GM10248 (cell line): ENCODE measurements at regions of chr6 and their contacts with region 1.

Region 1: GRCh38 chr6:166382933-166383801 is at the start of gene MPC1:
- DNase-seq: peak; percentile 97
- CTCF ChIP-seq: no peak

Region 2: GRCh38 chr6:166275714-166276166 is 107.4 kb before region 1 on chr6:
- CTCF ChIA-PET with region 1: interaction called, 33 read pairs
- POLR2A ChIA-PET with region 1: interaction called, 6 read pairs
- DNase-seq: peak; percentile 88
- CTCF ChIP-seq: peak; percentile 100

Region 3: GRCh38 chr6:166286839-166287271 is 96.3 kb before region 1 on chr6:
- CTCF ChIA-PET with region 1: interaction called, 22 read pairs
- POLR2A ChIA-PET with region 1: interaction called, 10 read pairs
- DNase-seq: peak; percentile 51
- CTCF ChIP-seq: no peak

Region 4: GRCh38 chr6:166325383-166326042 is 57.7 kb before region 1 on chr6:
- CTCF ChIA-PET with region 1: interaction called, 10 read pairs
- POLR2A ChIA-PET with region 1: no interaction called
- DNase-seq: peak; percentile 52
- CTCF ChIP-seq: no peak

Region 5: GRCh38 chr6:166348305-166348949 is 34.7 kb before region 1 on chr6:
- CTCF ChIA-PET with region 1: interaction called, 14 read pairs
- POLR2A ChIA-PET with region 1: no interaction called
- DNase-seq: no peak
- CTCF ChIP-seq: no peak

Region 6: DNA sequence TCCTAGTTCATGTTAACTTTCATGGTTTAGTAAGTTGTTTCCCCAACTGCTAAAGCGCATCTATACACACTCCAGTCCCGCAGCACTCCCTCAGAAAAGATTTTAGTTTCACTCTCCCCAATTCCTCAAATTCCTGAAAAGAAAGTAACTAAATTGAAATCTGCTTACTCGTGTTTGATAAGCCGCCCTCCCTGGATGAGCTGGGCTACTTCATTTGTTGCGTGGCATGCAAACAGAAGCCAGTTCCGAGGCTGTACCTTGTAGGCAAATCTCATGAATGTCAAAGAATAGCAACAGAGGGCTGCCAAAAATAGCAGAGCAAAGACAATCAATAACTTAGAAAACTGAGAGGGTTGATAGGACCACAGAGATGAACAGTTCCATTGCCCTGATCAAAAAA is 17.4 kb before region 1 on chr6:
- CTCF ChIA-PET with region 1: interaction called, 14 read pairs
- POLR2A ChIA-PET with region 1: no interaction called
- DNase-seq: no peak
- CTCF ChIP-seq: no peak

Region 7: DNA sequence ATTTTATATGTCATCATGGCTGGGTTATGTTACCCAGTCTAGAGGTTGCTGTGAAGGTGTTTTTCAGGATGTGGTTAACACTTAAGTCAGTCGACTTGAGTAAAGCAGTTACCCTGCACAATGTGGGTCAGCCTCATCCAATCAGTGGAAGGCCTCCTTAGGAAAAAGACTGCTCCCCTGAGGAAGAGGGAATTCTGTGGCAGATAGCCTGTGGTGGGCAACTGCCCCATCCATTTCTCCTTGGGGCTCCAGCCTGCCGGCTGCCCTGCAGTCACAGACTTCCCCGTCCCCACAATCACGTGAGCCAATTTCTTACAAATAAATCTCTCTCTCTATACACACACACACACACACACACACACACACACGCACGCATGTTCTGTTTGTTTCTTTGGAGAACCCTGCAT is 34.1 kb after region 1 on chr6:
- CTCF ChIA-PET with region 1: no interaction called
- POLR2A ChIA-PET with region 1: no interaction called
- DNase-seq: no peak
- CTCF ChIP-seq: no peak